Activated T-helper 1 cell treated with anti-CD3 and anti-CD28 coated beads, Interleukin-12 subunit alpha, Interleukin-12 subunit beta, Interleukin-2, Interleukin-4 antibody, amounts not matched to agents 30 ng/mL and 10 ng/mL and 1 ng/mL, durations not matched to agents 14 hours and 24 hours and 36 hours (primary cell): ENCODE measurements at regions of chr10 and their contacts with region 1.

Region 1: GRCh38 chr10:63614371-63614891 is 93.2 kb downstream of the REEP3 start:
- DNase-seq: no peak
- H3K4me3 Mint-ChIP-seq: no peak overlapping the region
- H3K27ac Mint-ChIP-seq: no peak overlapping the region
- H3K4me1 Mint-ChIP-seq: peaks cover 7% of the 10 kb centered on the region
- H3K27me3 Mint-ChIP-seq: no peaks in the 10 kb centered on the region

Region 2: DNA sequence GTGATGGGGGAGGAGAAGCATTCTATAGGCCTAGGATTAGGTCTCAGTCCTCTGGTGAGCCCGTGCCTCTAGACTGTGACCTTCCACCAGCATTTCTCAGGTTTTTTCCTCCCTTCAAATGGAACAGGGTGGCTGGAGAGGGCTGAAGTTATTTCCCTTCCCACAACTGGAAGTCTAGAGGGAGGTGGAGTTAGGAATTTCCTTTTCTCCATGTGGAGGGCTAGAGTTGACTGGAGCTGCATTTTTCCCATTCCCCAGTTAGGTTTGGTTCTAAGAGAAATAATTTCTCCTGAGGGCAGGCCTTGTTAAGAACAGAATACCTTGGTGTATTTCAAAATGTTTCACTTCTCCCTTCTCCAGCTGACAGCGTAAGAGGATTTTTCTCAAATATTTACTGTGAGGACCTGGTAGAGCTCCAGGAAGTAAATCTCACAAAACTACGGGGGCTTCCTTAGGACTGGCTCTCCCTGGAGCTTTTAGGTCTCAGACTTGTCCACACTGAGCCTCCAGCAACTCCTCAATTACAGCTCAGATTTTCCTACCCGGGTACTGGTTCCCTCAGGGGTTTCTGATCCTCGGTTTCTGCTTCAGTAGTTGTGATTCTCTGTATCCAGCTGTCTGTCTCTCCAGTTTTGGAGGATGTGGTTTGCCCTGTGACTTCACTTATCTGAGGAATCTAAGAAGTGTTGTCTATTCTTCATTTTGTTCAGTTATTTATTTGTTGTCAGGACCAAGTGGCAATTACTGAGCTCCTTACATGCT is 99.2 kb before region 1 on chr10:
- intact Hi-C with region 1: loop called (anchors 5 kb)
- DNase-seq: no peak
- H3K4me3 Mint-ChIP-seq: peak overlapping the region; percentile 24
- H3K27ac Mint-ChIP-seq: peak overlapping the region; percentile 80
- H3K4me1 Mint-ChIP-seq: peaks cover 61% of the 10 kb centered on the region
- H3K27me3 Mint-ChIP-seq: no peaks in the 10 kb centered on the region